Psoas muscle (tissue), 8 donors: ENCODE measurements at regions of chr18 and their contacts with region 1.

Region 1: GRCh38 chr18:80034068-80034851 is at the start of gene RBFA:
- DNase-seq: peak; percentile 100
- ATAC-seq: peak; percentile 93 to 95 (median 94)
- H3K4me3 ChIP-seq: peak within 1 kb of the TSS; percentile 97
- H3K27ac ChIP-seq: peak within 1 kb of the TSS; percentile 91
- H3K4me1 ChIP-seq: peaks cover 8% of the 10 kb centered on the region
- H3K27me3 ChIP-seq: no peaks in the 10 kb centered on the region
- CTCF ChIP-seq: peak; percentile 27
- total RNA-seq, gene RBFA: 17.9 to 29.0 (median 19.0) TPM

Region 2: DNA sequence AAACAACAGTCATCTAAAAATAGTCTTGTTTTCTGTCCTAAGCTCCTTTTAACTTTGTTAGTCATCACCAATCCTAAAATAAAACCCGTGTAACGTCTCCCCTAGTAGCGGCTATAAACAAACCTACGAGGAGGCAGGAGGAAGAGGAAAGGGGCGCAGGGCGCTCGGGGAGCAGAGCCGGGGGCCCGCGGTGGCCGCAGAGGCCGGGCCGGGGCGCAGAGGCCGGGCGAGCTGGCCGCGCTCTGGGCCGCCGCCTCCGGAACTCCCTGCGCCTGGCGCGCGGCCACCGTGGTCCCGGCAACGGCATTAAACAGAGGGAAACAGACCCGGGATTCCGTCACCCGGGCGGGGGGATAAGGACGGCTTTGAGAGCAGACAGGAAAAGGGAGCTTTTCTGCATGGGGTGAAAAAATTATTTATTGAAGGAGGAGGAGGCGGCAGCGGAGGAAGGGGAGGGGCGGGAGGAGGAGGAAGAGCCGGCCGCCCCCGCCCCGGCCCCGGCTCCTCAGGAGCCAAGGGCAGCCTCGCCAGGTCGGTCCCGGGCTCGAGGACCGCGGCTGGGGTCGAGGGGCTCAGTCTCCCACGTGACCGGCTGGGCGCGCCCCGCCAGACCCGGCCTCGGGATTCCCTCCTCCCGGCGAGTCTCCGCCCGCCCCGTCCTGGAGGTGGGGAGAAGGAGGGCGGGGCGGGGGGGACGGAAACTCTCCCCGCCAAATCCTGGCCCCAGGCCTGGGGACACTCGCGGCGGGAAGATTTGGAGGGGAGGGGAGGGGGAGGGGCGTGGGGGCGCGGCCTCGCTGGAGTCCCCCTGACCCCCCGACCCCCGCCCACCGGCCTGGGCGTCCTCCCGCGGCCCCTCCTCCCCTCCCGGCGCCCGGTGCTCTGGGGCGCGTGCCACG is 640.4 kb before region 1 on chr18:
- intact Hi-C with region 1: loop called in 1 of 2 experiments (anchors 10 kb)
- DNase-seq: peak; percentile 93
- ATAC-seq: peak; percentile 58 to 73 (median 64)
- H3K4me3 ChIP-seq: peak overlapping the region; percentile 66
- H3K27ac ChIP-seq: peak overlapping the region; percentile 93
- H3K4me1 ChIP-seq: peaks cover 16% of the 10 kb centered on the region
- H3K27me3 ChIP-seq: no peaks in the 10 kb centered on the region
- CTCF ChIP-seq: no peak